CD8-positive, alpha-beta T cell (primary cell): ENCODE measurements at regions of chr2 and their contacts with region 1.

Region 1: DNA sequence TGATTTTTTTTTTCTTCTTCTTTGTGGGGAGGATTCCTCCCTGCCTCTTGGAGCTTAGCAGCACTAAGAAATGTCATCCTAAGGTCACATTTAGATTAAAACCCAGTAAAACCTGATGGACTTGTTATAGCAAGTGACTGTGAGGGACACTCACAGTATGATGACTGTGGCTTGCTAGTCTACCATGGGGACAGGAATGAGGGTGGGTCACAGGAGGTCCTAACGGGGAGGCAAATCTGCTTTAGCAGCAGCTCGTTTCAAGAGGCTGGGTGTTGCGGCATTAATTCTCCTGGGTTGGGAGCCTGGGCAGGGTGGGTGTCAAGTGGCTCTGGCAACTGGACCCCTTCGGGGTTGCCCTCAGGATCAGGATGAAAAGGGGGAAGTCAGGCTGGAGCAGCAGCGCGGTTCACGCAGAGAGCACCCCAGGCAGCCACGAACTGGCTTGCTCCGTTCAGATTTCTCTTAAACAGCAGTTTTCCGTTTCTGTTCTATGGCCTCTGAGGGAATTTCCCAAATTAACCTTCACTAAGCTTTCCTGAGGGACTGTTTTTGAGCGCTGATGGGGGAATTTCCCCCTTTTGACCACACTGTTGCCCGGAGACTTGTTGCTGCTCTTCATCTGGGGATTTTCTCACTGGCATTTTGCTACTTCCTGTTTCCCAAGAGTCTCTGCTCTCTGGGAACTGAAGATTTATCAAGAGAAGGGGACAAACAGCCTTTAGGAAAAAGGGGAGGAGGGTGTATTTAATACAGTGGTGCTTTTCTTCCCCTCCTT is 59.8 kb upstream of the PELI1 start:
- DNase-seq: peak in 4 of 9 experiments; percentile 6 to 89 (median 48)
- ATAC-seq: peak; percentile 42
- H3K4me3 ChIP-seq: peak overlapping the region; percentile 25 to 42
- H3K4me3 Mint-ChIP-seq: peak overlapping the region; percentile 71
- H3K27ac ChIP-seq: peak overlapping the region; percentile 13 to 40
- H3K27ac Mint-ChIP-seq: peak overlapping the region; percentile 87
- H3K4me1 ChIP-seq: peaks cover 29% of the 10 kb centered on the region
- H3K4me1 Mint-ChIP-seq: peaks cover 64% of the 10 kb centered on the region
- H3K27me3 ChIP-seq: no peaks in the 10 kb centered on the region
- H3K27me3 Mint-ChIP-seq: no peaks in the 10 kb centered on the region
- CTCF ChIP-seq: no peak

Region 2: DNA sequence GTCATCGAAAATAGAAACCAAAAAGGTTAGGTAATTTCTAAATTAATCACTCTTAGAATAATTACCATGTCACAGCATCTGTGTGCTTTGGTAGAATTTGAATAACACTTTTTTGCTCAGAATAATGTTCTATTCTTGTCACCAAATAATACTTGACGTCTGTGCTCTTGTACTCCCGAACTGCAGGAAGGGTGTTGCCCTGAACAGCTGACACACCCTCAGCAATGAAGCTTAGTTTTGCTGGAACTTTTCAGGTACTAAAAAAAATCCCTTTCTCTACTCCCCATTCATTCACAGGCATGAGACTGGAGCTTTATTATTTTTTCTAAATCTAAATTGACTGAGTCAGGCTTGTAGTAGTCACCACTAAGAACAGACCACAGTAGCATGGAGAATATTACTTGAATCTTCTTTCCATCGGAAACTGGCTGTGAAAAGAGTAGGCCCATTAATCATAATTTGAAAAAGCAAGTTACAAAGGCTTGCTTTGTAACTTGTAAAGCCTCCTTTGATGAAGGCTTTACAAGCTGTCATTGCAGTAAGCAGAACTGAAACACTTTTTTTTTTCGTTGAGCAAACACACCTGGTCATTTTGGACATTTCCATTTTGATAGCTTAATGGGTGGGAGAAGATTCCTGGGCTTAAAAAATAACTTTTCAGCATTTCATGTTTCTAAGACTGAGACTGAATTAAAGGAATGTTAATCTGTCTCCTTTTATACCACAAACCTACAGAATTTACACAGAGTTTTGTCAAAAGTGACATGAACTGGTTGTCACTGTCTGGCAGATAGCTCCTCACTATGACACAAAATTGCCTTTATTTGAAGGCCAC is 10.5 kb after region 1 on chr2:
- CTCF ChIA-PET with region 1: no interaction called
- POLR2A ChIA-PET with region 1: interaction called, 10 read pairs
- intact Hi-C with region 1: no loop called
- DNase-seq: peak in 3 of 9 experiments; percentile 25 to 51 (median 49)
- ATAC-seq: peak; percentile 70
- H3K4me3 ChIP-seq: no peak overlapping the region
- H3K4me3 Mint-ChIP-seq: peak overlapping the region; percentile 52
- H3K27ac ChIP-seq: peak overlapping the region in 1 of 2 experiments; percentile 13
- H3K27ac Mint-ChIP-seq: peak overlapping the region; percentile 77
- H3K4me1 ChIP-seq: peaks cover 18% of the 10 kb centered on the region
- H3K4me1 Mint-ChIP-seq: peaks cover 30% of the 10 kb centered on the region
- H3K27me3 ChIP-seq: no peaks in the 10 kb centered on the region
- H3K27me3 Mint-ChIP-seq: no peaks in the 10 kb centered on the region
- CTCF ChIP-seq: no peak

Region 3: DNA sequence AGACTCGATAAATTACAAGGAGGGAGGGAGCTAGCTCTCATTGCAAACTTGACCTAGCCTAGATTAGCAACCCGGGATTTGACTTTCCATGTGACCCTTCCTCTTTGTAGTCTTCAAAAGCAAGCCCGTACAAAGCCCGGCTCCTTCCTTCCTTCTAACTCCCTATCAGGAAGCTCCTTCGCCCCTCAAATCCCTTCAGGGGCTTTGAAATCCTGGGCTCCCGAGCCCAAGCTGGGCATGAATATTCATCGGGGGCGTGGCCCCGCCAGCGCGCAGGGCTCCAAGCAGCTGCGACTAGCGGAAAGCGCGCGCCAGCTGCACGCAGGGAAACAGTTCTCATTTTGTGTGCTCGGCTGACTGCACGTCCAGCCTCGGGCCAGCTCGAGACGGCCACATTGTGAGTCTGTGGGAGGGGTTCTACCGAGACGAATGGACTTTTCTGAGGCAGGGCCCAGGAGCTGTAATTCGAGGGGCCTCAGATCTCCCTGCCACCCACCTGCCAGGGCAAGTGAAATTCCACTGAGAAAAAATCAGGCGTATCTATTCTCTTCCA is 24.2 kb after region 1 on chr2:
- CTCF ChIA-PET with region 1: no interaction called
- POLR2A ChIA-PET with region 1: no interaction called
- intact Hi-C with region 1: loop called in 1 of 2 experiments (anchors 1 kb)
- DNase-seq: peak; percentile 22 to 73 (median 54)
- ATAC-seq: peak; percentile 89
- H3K4me3 ChIP-seq: peak overlapping the region; percentile 53 to 56
- H3K4me3 Mint-ChIP-seq: peak overlapping the region; percentile 91
- H3K27ac ChIP-seq: no peak overlapping the region
- H3K27ac Mint-ChIP-seq: peak overlapping the region; percentile 63
- H3K4me1 ChIP-seq: no peaks in the 10 kb centered on the region
- H3K4me1 Mint-ChIP-seq: peaks cover 19% of the 10 kb centered on the region
- H3K27me3 ChIP-seq: no peaks in the 10 kb centered on the region
- H3K27me3 Mint-ChIP-seq: peaks cover 2% of the 10 kb centered on the region
- CTCF ChIP-seq: no peak

Region 4: DNA sequence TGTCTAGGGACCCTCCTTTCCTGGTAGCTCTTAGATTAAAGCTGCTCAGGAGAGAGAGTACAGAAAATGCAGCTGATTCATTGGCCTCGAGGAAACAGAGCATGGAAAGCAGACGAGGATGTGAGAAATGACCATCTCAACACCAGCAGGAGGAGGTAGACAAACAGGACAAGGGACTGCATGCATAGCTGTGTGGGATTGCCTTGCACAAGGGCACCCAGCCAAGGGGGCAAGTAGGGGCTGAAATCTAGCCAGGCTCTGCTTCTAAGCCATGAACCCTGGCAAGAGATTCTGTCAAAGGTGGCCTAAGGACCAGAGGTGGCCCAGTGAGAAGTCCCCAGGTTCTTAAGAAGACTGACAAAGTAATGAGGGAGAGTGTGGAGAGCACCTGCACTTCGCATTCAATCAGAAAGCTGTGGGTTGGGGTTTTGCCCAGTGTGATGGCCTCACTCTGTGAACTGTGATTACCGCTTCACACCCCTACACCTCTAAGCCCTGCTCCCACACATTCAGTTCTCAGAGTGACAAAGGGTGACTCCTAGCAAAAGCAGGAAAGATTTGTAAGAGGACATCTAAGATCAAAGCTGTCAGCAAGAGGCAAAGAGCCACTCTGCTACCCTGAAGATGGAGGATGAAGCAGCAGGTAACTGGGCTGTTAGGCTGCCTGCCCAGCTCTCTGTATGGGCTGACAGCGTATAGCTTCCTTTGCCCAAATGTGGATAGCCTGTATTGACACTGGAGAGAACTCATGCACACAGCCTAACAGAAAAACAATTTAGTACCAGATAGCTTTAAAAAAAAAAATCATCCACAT is 91.5 kb after region 1 on chr2:
- CTCF ChIA-PET with region 1: no interaction called
- POLR2A ChIA-PET with region 1: no interaction called
- intact Hi-C with region 1: no loop called
- DNase-seq: no peak
- ATAC-seq: no peak
- H3K4me3 ChIP-seq: no peak overlapping the region
- H3K4me3 Mint-ChIP-seq: no peak overlapping the region
- H3K27ac ChIP-seq: no peak overlapping the region
- H3K27ac Mint-ChIP-seq: no peak overlapping the region
- H3K4me1 ChIP-seq: no peaks in the 10 kb centered on the region
- H3K4me1 Mint-ChIP-seq: peaks cover 11% of the 10 kb centered on the region
- H3K27me3 ChIP-seq: no peaks in the 10 kb centered on the region
- H3K27me3 Mint-ChIP-seq: no peaks in the 10 kb centered on the region
- CTCF ChIP-seq: no peak

Region 5: DNA sequence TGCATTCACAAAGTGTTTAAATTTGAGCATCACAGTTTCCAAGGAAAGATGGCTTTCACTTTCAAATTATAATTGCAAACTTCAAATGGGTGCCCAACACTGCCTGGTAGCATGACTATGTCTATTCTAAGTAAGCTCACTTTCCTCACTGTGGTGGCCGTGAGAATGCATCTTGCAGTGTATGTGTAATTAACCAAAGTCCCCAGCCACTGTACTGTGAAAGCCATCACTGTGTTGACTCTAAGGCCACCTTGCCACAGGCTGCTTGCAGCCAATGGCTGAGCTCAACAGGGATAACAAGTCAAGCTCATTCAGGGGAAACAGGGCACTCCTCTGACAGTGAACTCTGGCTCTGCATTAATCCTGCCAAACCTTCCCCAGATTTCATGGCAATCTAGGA is 206.6 kb after region 1 on chr2:
- CTCF ChIA-PET with region 1: no interaction called
- POLR2A ChIA-PET with region 1: no interaction called
- intact Hi-C with region 1: no loop called
- DNase-seq: no peak
- ATAC-seq: no peak
- H3K4me3 ChIP-seq: no peak overlapping the region
- H3K4me3 Mint-ChIP-seq: no peak overlapping the region
- H3K27ac ChIP-seq: no peak overlapping the region
- H3K27ac Mint-ChIP-seq: no peak overlapping the region
- H3K4me1 ChIP-seq: no peaks in the 10 kb centered on the region
- H3K4me1 Mint-ChIP-seq: no peaks in the 10 kb centered on the region
- H3K27me3 ChIP-seq: no peaks in the 10 kb centered on the region
- H3K27me3 Mint-ChIP-seq: no peaks in the 10 kb centered on the region
- CTCF ChIP-seq: no peak

Region 6: DNA sequence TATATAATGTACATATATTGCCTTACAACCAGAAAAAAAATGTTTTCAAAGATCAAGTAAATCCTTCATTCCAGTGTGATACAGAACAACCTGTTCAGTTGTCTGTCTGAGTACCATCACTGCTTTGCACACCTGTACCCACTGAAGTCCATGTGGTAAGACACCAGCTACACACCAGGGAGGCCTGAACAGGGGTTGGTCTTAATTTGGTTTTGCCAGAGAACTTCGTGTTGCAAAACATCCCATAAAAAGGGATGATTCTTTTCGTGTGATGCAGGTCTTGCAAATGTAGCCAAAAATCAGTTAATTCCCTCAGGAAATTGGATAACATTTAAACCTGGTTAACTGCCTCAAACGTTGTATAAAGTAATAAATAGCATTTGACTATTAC is 711.5 kb after region 1 on chr2:
- CTCF ChIA-PET with region 1: no interaction called
- POLR2A ChIA-PET with region 1: no interaction called
- intact Hi-C with region 1: no loop called
- DNase-seq: no peak
- ATAC-seq: no peak
- H3K4me3 ChIP-seq: no peak overlapping the region
- H3K4me3 Mint-ChIP-seq: no peak overlapping the region
- H3K27ac ChIP-seq: no peak overlapping the region
- H3K27ac Mint-ChIP-seq: no peak overlapping the region
- H3K4me1 ChIP-seq: no peaks in the 10 kb centered on the region
- H3K4me1 Mint-ChIP-seq: peaks cover 23% of the 10 kb centered on the region
- H3K27me3 ChIP-seq: no peaks in the 10 kb centered on the region
- H3K27me3 Mint-ChIP-seq: no peaks in the 10 kb centered on the region
- CTCF ChIP-seq: no peak